ENCODE measurements at regions of chr17 and their contacts with region 1.

Region 1: GRCh38 chr17:2266045-2266864 is 37.3 kb downstream of the SMG6 start:
- DNase-seq: peak; percentile 50 to 96 (median 86)
- ATAC-seq: peak; percentile 82 to 84
- H3K4me3 Mint-ChIP-seq: peak overlapping the region; percentile 70 to 91 (median 84)
- H3K27ac Mint-ChIP-seq: peak overlapping the region; percentile 96 to 100 (median 98)
- H3K4me1 Mint-ChIP-seq: peaks cover 33 to 88% (median 82%) of the 10 kb centered on the region in 4 donors
- H3K27me3 Mint-ChIP-seq: no peaks in the 10 kb centered on the region

Region 2: GRCh38 chr17:2054512-2055291 is 211.6 kb before region 1 on chr17 and contains the start of gene HIC1:
- POLR2A ChIA-PET with region 1: interaction called, 16 read pairs
- DNase-seq: peak; percentile 54 to 85 (median 78)
- ATAC-seq: peak; percentile 56 to 60
- H3K4me3 Mint-ChIP-seq: peak within 1 kb of the TSS; percentile 72 to 86 (median 79)
- H3K27ac Mint-ChIP-seq: peak within 1 kb of the TSS in 9 of 10 donors; percentile 19 to 92 (median 81)
- H3K4me1 Mint-ChIP-seq: peaks cover 18 to 34% (median 28%) of the 10 kb centered on the region in 4 donors
- H3K27me3 Mint-ChIP-seq: peaks cover 0 to 18% (median 9%) of the 10 kb centered on the region in 5 donors
- polyA plus RNA-seq, gene HIC1: 0.08 to 0.10 TPM in 2 of 3 donors, not detected in the other

Region 3: DNA sequence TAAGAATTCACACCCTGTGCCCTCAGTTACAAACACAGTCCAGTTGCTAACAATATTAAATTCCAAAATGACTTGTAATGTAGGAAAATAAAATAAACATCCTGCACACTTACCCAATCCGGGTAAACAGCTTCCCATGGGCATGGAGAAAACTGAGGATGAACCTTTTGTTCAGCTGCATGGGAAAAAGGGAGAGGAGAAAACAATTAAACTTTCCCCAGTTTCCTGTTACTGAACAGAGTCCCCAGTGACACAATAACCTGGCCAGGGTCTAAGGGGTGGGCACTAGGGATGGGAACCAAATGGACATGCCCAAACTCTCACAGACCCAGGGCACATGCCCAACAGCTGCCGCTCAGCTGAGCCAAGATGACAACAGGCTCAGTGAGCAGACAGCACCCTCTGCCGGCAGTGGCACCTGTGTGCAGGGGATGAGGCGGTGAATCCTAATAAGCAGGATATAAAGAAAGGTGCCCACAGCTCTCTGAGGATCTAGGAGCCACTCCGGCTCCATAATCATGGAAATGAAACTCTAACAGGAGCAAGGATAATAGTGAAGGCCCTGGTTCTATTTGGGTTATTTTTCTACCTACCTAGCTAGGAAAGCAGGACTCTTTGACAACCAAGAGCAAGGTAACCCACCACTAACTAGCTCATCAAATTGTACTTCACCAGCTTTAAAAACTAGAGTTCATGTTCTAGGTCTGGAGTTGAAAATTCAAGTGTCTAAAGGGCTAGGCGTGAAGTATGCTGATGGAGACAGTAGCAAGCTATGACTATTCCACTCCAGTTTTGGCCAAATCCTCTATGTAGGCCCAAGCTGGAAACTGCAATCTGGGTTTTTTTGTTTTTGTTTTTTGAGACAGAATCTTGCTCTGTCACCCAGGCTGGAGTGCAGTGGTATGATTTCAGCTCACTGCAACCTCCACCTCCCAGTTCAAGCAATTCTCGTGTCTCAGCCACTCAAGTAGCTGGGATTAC is 21.4 kb before region 1 on chr17:
- POLR2A ChIA-PET with region 1: interaction called, 59 read pairs
- DNase-seq: peak; percentile 68 to 89 (median 77)
- ATAC-seq: peak; percentile 99
- H3K4me3 Mint-ChIP-seq: no peak overlapping the region
- H3K27ac Mint-ChIP-seq: peak overlapping the region in 9 of 10 donors; percentile 40 to 94 (median 65)
- H3K4me1 Mint-ChIP-seq: peaks cover 8 to 39% (median 25%) of the 10 kb centered on the region in 4 donors
- H3K27me3 Mint-ChIP-seq: no peaks in the 10 kb centered on the region

Region 4: DNA sequence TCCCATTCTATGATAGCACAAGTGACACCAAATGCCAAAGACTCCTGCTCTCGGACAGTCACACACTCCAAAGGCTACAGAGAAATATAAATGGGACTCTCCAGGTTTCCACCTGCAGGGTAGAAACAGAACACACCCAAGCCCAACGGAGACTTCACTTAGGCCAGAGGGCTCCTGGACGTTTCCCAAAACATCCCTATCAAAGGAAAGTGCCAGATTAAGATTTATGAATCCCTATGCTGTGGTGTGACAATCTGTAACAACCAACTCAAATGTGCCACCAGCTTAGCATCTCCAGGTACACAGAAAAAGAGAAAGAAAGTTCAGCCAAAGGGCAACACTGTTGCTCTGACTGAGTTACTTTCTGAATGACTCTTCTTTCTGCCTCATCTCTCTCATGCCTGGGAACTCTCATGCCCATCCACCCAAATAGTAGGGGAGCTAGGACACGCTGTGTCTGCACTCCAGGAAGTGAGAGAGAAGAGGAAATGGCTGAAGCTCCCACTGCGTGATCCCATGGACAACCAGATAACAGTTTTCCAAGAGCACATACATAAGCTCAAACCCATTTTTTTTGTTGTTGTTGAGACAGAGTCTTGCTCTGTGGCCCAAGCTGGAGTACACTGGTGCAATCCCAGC is 12.4 kb before region 1 on chr17:
- POLR2A ChIA-PET with region 1: interaction called, 59 read pairs
- DNase-seq: peak in 2 of 10 donors; percentile 28 to 38
- ATAC-seq: peak; percentile 14 to 42
- H3K4me3 Mint-ChIP-seq: peak overlapping the region in 7 of 10 donors; percentile 7 to 55 (median 46)
- H3K27ac Mint-ChIP-seq: peak overlapping the region; percentile 66 to 94 (median 84)
- H3K4me1 Mint-ChIP-seq: peaks cover 31 to 73% (median 57%) of the 10 kb centered on the region in 4 donors
- H3K27me3 Mint-ChIP-seq: no peaks in the 10 kb centered on the region

Measured in naive thymus-derived CD8-positive, alpha-beta T cell (primary cell).